PC-9 (cell line): ENCODE measurements at regions of chr16 and their contacts with region 1.

Region 1: DNA sequence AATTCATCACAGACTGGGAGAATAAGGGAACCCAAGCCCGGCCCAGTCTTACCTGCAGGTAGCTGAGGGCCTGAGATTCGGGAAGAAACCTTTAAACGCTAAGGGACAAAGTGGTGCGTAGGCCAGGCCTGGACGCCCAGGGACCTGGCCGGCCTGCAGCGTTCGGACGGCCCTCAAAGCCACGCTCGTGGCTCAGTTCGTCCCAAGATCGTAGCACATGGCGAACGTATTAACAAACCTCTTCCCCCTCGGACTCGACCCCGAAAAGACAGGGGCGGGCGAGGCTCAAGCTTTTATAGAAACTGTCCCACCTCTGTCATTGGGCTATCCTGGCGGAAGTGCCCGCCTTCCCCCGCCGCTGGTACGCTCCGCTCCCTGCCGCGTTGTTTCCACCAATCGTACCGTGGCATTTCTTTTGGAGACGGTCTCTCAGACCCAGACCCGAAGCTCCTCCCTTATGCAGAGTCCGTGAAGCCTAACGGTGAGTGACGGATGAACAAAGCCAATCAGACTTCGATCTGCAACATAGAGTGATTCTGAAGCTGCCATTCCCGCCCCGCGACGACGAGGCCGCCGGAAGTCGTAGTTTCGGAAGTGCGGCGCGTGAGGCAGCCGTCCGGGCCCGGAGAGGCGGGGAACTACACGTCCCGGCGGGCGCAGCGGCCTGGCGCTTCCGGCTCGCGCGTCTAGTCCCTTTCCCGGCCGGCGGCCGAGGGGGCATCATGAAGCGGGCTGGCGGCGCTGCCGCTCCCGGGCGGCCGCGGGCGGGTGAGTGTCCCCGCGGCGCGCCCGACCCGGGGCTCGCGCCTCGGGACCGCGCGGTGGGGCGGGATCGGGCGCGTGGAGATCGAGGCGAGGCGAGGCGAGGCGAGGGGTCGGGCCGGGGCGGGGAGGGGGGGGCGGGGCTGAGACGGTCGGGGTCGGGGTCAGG is at the start of gene TRAF7:
- DNase-seq: peak; percentile 99 to 100
- H3K4me3 ChIP-seq: peak within 1 kb of the TSS; percentile 99
- H3K27ac ChIP-seq: peak within 1 kb of the TSS; percentile 73
- H3K4me1 ChIP-seq: peaks cover 38% of the 10 kb centered on the region
- H3K27me3 ChIP-seq: no peaks in the 10 kb centered on the region
- CTCF ChIP-seq: no peak
- total RNA-seq, gene TRAF7: 166 and 199 TPM in 2 replicates

Region 2: DNA sequence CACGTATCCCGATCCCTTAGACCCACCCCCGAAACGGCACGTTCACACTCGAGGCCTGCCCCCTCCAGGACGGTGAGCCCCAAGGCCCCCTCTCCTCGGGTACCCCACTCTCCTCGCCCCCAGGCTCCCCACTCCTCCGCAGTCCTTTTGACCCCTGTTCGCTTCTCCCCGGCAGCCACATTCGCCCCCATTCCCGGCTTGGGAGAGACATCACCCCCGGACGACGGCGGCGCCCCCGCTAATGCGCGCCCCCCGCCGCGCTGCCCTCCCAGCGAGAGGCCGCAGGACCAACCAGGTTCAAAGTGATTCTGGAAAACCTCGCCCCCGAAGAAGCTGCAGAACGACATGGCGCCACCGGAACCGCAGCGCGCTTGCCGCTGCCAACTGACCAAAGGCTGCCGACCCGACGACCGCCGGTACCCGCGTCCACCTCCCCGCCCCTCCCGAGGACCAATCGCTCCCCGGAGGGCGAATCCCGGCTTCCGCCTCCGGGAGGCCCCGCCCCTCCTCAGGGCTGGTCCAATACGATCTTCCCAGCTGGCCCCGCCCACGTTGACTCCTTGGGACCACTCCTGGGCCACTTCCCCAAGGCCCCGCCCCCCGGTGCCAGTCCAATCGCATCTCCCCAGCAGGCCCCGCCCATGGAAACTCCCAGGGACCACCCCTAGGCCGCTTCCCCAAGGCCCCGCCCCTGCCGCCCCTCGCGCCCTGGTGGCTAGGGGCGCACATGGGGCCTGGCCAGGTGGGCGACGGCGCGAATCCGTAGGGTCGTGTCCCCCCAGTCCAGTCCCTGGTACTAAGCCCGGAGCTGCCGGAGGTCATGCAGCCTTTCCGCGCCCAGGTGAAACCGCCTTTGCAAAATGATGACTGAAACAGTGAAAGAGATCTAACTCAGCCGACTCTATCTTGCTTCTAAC is 212.3 kb before region 1 on chr16 and contains the start of gene MSRB1:
- CTCF ChIA-PET with region 1: no interaction called
- POLR2A ChIA-PET with region 1: no interaction called
- intact Hi-C with region 1: no loop called
- DNase-seq: peak; percentile 93 to 100
- H3K4me3 ChIP-seq: peak within 1 kb of the TSS; percentile 81
- H3K27ac ChIP-seq: peak within 1 kb of the TSS; percentile 61
- H3K4me1 ChIP-seq: peaks cover 18% of the 10 kb centered on the region
- H3K27me3 ChIP-seq: no peaks in the 10 kb centered on the region
- CTCF ChIP-seq: no peak
- total RNA-seq, gene MSRB1: 49.4 and 54.9 TPM in 2 replicates

Region 3: DNA sequence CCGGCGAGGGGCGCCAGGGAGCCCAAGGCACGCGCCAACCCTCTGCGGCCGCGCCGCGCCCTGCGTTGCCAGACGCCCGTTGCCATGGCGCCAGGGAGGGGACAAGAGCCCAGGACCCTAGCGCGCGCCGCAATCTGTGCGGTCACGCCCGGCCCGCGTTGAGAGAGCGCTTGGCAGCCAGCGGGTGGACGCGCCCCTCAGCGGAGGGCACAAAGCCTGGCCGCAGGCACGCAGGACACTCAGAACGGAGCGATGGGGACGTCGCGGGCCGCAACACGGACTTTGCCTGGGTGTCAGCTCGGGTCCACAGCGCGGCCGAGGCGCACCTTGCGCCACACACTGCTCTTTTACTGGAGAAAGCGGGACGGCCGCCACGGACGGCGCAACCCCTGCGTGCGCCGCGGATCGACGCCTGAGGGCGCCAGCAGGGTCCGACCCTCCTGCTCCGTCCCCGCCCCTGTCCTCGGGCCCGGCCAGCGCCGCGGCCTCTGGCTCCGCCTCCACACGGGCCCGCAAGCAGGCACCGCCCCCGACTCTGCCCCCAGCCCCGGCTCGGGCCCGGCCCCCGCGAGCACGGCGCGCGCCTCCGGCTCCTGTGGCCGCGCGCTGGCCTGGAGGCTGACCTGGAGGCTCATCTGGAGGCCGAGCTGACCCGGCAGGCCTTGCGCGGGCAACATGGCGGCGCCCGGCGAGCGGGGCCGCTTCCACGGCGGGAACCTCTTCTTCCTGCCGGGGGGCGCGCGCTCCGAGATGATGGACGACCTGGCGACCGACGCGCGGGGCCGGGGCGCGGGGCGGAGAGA is 171.6 kb before region 1 on chr16 and contains the start of gene GFER:
- CTCF ChIA-PET with region 1: interaction called, 13 read pairs
- POLR2A ChIA-PET with region 1: interaction called, 3 read pairs
- intact Hi-C with region 1: no loop called
- DNase-seq: peak; percentile 73 to 98
- H3K4me3 ChIP-seq: peak within 1 kb of the TSS; percentile 93
- H3K27ac ChIP-seq: no peak within 1 kb of the TSS
- H3K4me1 ChIP-seq: peaks cover 67% of the 10 kb centered on the region
- H3K27me3 ChIP-seq: no peaks in the 10 kb centered on the region
- CTCF ChIP-seq: no peak; the same call in 1 of the 2 replicates
- total RNA-seq, gene GFER: 59.7 and 63.8 TPM in 2 replicates

Region 4: GRCh38 chr16:2194852-2195321 is 39.5 kb after region 1 on chr16:
- CTCF ChIA-PET with region 1: interaction called, 22 read pairs
- POLR2A ChIA-PET with region 1: interaction called, 3 read pairs
- intact Hi-C with region 1: no loop called
- DNase-seq: peak in 1 of 2 experiments; percentile 59
- H3K4me3 ChIP-seq: no peak overlapping the region
- H3K27ac ChIP-seq: no peak overlapping the region
- H3K4me1 ChIP-seq: no peaks in the 10 kb centered on the region
- H3K27me3 ChIP-seq: peaks cover 35% of the 10 kb centered on the region
- CTCF ChIP-seq: peak; percentile 70

Region 5: GRCh38 chr16:2251483-2252240 is 96.3 kb after region 1 on chr16 and contains the start of gene ECI1:
- CTCF ChIA-PET with region 1: interaction called, 5 read pairs
- POLR2A ChIA-PET with region 1: interaction called, 8 read pairs
- intact Hi-C with region 1: loop called (anchors 1 kb)
- DNase-seq: peak; percentile 84 to 98
- H3K4me3 ChIP-seq: peak within 1 kb of the TSS; percentile 91
- H3K27ac ChIP-seq: peak within 1 kb of the TSS; percentile 86
- H3K4me1 ChIP-seq: peaks cover 22% of the 10 kb centered on the region
- H3K27me3 ChIP-seq: no peaks in the 10 kb centered on the region
- CTCF ChIP-seq: peak; percentile 69
- total RNA-seq, gene ECI1: 131 and 216 TPM in 2 replicates

Region 6: GRCh38 chr16:2474877-2475412 is 319.6 kb after region 1 on chr16 and contains the start of gene TBC1D24:
- CTCF ChIA-PET with region 1: no interaction called
- POLR2A ChIA-PET with region 1: no interaction called
- intact Hi-C with region 1: no loop called
- DNase-seq: peak; percentile 46 to 93
- H3K4me3 ChIP-seq: peak within 1 kb of the TSS; percentile 98
- H3K27ac ChIP-seq: peak within 1 kb of the TSS; percentile 34; the same call in 1 of the 2 replicates
- H3K4me1 ChIP-seq: peaks cover 13% of the 10 kb centered on the region; the same call in 1 of the 2 replicates
- H3K27me3 ChIP-seq: no peaks in the 10 kb centered on the region
- CTCF ChIP-seq: no peak
- total RNA-seq, gene TBC1D24: 30.0 and 34.2 TPM in 2 replicates